ENCODE measurements at regions of chr2 and their contacts with region 1.

Region 1: DNA sequence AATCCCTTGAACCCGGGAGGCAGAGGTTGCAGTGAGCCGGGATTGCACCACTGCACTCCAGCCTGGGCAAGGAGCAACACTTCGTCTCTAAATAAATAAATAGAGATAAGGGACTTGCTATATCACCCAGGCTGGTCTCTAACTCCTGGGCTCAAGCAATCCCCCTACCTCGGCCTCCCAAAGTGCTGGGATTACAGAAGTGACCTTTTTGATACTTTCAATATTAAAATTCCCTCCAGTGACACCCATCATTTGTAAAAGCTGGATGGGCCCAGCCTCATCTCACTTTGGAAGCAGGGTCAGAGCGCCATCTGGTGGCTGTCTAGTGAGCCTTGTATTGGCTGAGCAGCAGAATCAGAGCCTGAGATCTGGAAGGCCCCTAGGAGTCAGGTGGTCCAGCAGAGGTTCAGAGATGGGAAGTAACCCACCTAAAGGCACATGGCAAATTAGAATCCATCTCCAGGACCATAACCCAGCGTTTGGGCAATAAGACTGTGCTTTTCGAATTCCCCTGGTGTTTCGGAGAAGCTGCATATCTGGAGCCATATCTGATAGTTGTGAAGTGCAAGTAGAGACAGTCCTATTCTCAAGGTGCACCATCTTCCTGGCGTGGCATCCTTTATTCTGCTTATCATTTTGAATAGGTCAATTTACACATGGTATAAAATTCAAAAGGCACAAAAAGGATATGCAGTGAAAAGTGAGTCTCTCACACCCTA is 18.3 kb upstream of the SLC35F6 start:
- DNase-seq: no peak
- H3K4me3 ChIP-seq: no peak overlapping the region
- CTCF ChIP-seq: peak; percentile 93

Region 2: GRCh38 chr2:26577434-26578112 is 168.2 kb before region 1 on chr2:
- CTCF ChIA-PET with region 1: interaction called, 111 read pairs
- POLR2A ChIA-PET with region 1: no interaction called
- DNase-seq: no peak
- H3K4me3 ChIP-seq: no peak overlapping the region
- CTCF ChIP-seq: peak; percentile 94

Region 3: GRCh38 chr2:26598336-26598995 is 147.3 kb before region 1 on chr2:
- CTCF ChIA-PET with region 1: interaction called, 698 read pairs
- POLR2A ChIA-PET with region 1: no interaction called
- DNase-seq: no peak
- H3K4me3 ChIP-seq: no peak overlapping the region
- CTCF ChIP-seq: no peak

Region 4: GRCh38 chr2:26720322-26721166 is 25.2 kb before region 1 on chr2:
- CTCF ChIA-PET with region 1: interaction called, 14 read pairs
- POLR2A ChIA-PET with region 1: no interaction called
- DNase-seq: no peak
- H3K4me3 ChIP-seq: no peak overlapping the region
- CTCF ChIP-seq: no peak

Region 5: DNA sequence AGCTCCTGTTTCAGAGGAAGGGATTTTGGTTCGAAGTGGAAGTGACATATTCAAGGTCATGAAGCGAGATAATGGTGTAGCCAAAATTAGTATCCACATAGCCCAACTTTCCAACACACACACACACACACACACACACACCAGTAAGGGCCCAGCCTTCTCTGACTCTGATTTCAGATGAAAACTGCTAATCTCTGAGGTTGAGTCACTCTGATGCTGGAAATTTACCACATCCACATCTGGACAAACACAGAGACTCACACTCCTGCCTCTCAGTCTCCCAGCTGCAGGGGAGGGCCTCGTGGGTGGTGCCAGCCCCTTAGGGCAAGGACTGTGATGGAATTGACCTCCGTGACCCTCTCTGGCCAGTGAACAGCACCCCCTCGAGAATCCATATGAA is 10.7 kb before region 1 on chr2:
- CTCF ChIA-PET with region 1: interaction called, 76 read pairs
- POLR2A ChIA-PET with region 1: interaction called, 4 read pairs
- DNase-seq: peak; percentile 54
- H3K4me3 ChIP-seq: no peak overlapping the region
- CTCF ChIP-seq: no peak